Activated naive CD4-positive, alpha-beta T cell treated with anti-CD3 and anti-CD28 coated beads for 36 hours (primary cell): ENCODE measurements at regions of chr3 and their contacts with region 1.

Region 1: GRCh38 chr3:183579967-183580900 is 24.7 kb upstream of the KLHL6 start:
- DNase-seq: no peak
- H3K4me3 Mint-ChIP-seq: no peak overlapping the region
- H3K27ac Mint-ChIP-seq: no peak overlapping the region
- H3K4me1 Mint-ChIP-seq: peaks cover 32% of the 10 kb centered on the region
- H3K27me3 Mint-ChIP-seq: no peaks in the 10 kb centered on the region

Region 2: DNA sequence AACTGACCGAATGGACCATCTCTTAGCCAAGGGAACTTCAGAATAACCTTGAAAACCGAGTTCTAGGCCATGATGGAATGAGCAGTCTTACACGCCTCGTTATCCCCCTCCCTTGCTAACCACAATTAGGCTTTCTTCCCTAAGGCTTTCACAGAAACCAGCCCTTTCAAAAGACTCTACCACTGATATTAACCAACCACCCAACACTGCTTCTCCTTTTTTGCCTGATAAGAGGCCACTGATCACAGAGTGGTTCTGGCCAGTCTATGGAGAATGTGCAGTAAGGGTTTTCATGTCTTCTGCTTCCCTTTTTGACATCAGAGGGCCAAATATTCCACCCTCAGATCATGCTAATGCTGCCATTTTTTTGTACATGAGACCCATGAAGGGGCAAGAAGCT is 211.1 kb before region 1 on chr3:
- CTCF ChIA-PET with region 1: no interaction called
- intact Hi-C with region 1: no loop called
- DNase-seq: no peak
- H3K4me3 Mint-ChIP-seq: no peak overlapping the region
- H3K27ac Mint-ChIP-seq: no peak overlapping the region
- H3K4me1 Mint-ChIP-seq: peaks cover 36% of the 10 kb centered on the region
- H3K27me3 Mint-ChIP-seq: no peaks in the 10 kb centered on the region

Region 3: DNA sequence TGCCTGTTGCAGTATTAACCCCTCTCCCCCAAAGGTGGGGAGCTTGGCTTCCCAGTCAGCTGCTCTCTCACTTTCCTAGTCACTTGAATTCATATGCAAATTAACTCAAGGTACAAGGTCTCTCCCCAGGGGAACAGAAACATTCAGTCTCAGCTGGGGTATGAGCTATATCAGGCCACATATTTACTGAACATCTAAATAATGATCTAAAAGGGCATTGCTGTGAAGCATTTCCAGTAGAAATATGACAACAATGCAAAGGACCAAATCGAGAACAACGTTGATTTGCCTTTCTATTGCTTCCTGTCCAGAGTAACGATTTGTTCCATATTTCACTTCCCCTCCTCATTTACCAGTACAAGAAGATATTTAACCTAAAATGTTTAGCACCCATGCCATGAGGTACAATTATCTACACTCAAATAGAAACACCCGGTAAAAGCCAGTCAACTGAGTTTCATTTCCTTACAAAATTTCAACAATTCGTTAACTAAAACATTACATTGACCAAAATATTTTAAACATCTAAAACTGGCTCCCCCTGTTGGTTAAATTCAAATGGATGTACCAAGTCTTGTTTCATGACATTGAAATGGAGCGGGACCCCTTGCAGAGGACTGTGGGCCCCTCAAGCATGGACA is 11.8 kb after region 1 on chr3:
- CTCF ChIA-PET with region 1: interaction called, 10 read pairs
- intact Hi-C with region 1: no loop called
- DNase-seq: peak; percentile 19
- H3K4me3 Mint-ChIP-seq: peak overlapping the region; percentile 37
- H3K27ac Mint-ChIP-seq: peak overlapping the region; percentile 86
- H3K4me1 Mint-ChIP-seq: peaks cover 48% of the 10 kb centered on the region
- H3K27me3 Mint-ChIP-seq: no peaks in the 10 kb centered on the region